HCT116 (cell line): ENCODE measurements at regions of chr5 and their contacts with region 1.

Region 1: GRCh38 chr5:45774528-45774927 is 78.3 kb upstream of the HCN1 start:
- DNase-seq: no peak
- ATAC-seq: no peak
- H3K4me3 ChIP-seq: no peak overlapping the region
- H3K27ac ChIP-seq: no peak overlapping the region
- H3K4me1 ChIP-seq: no peaks in the 10 kb centered on the region
- H3K27me3 ChIP-seq: no peaks in the 10 kb centered on the region
- CTCF ChIP-seq: peak; percentile 38 to 74 (median 49); a peak in 5 of 6 replicates
- POLR2A ChIP-seq: no peak
- RAD21 ChIP-seq: peak; percentile 64

Region 2: GRCh38 chr5:44862808-44863207 is 911.7 kb before region 1 on chr5:
- CTCF ChIA-PET with region 1: interaction called, 11 read pairs
- POLR2A ChIA-PET with region 1: no interaction called
- RAD21 ChIA-PET with region 1: interaction called in 1 of 2 experiments, 4 read pairs
- intact Hi-C with region 1: loop called (anchors 5 kb)
- DNase-seq: peak; percentile 41
- ATAC-seq: peak; percentile 63; the same call in 1 of the 2 replicates
- H3K4me3 ChIP-seq: no peak overlapping the region
- H3K27ac ChIP-seq: no peak overlapping the region
- H3K4me1 ChIP-seq: no peaks in the 10 kb centered on the region
- H3K27me3 ChIP-seq: no peaks in the 10 kb centered on the region
- CTCF ChIP-seq: peak; percentile 52 to 65 (median 57); a peak in 5 of 6 replicates
- POLR2A ChIP-seq: no peak
- RAD21 ChIP-seq: peak; percentile 84

Region 3: GRCh38 chr5:45639038-45639437 is 135.5 kb before region 1 on chr5:
- CTCF ChIA-PET with region 1: no interaction called
- POLR2A ChIA-PET with region 1: no interaction called
- RAD21 ChIA-PET with region 1: no interaction called
- intact Hi-C with region 1: no loop called
- DNase-seq: peak; percentile 8
- ATAC-seq: no peak
- H3K4me3 ChIP-seq: no peak overlapping the region
- H3K27ac ChIP-seq: no peak overlapping the region
- H3K4me1 ChIP-seq: no peaks in the 10 kb centered on the region
- H3K27me3 ChIP-seq: no peaks in the 10 kb centered on the region
- CTCF ChIP-seq: peak; percentile 33 to 58 (median 42); a peak in 4 of 6 replicates
- POLR2A ChIP-seq: no peak
- RAD21 ChIP-seq: peak; percentile 48; the same call in 1 of the 2 replicates